ENCODE measurements at regions of chr11 and their contacts with region 1.

Region 1: DNA sequence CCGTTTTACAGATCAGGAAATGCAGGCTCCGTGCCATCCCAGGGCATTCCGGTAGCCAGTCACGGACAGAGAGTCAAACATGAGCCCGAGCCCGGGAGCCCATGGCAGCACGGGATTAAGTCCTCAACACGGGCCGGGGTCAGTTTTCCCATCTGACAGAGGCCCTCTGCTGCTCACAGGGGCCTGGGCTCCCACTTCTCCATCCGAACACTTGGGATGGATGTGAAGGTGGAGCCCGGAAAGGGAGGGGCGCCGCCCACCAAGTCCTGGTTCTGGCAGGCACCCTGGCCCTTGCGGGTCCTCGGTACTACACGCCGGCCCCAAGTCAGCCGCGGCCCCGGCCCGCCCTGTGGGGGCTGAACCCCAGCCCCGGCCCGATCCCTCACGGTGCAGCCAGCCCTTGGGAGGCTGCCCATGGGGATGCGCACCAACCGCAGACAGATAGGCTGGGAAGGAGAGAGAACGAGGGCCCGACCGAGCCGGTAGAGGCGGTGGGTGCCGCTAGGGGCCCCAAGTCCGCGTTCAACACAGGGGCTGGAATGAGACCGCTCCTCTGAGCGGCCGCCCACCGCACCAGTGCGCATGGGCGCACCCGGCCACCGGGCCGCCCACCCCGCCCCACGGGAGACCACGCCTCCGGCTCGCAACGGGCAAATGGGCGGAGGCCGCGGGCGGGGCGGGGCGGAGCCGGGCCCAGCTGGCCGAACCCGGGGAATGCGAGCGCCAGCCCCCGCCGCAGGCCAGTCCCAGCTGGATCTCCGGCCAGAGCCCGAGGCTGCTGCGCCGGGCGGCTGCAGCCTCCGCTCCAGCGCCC is at the start of gene CAPN5:
- DNase-seq: peak; percentile 81
- H3K4me3 Mint-ChIP-seq: peak within 1 kb of the TSS; percentile 76
- H3K27ac Mint-ChIP-seq: peak within 1 kb of the TSS; percentile 54
- H3K4me1 Mint-ChIP-seq: peaks cover 6% of the 10 kb centered on the region
- H3K27me3 Mint-ChIP-seq: peaks cover 18% of the 10 kb centered on the region
- total RNA-seq, gene CAPN5: 0.81 to 0.89 TPM

Region 2: DNA sequence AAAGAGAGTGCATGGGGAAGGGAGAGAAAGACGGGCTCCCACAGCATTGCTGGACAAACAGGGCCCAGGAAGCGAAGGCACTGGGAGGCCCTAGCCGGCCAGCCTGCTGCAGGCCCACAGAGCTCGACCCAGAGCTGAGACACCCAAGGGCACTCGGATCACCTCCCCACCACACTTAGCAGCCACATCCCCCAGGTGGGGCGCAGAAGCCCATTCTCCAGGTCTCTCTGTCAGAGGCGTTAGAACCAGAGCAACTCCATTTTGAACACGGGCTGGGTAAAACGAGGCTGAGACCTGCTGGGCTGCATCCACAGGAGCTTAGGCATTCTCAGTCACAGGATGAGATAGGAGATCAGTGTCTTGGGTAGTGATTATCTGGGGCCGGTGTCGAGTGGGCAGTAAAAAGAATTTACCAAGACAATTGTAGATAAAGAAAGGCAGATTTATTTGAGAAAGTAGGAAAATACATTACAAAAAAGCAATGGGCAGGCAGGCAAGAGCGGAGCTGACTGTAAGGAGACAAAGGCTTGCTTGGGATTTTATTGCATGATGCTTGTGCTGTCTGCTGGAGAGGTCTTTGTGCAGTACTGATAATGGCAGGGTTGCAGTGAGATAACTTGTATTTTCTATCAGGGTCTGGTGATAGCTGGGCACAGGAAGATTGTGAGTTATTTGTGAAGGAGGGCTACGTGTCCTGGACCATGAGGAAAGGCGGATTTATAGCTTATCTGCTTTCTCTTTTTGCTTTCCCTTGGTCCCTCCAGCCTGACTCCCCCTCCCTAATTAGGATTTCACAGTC is 13.0 kb before region 1 on chr11:
- CTCF ChIA-PET with region 1: interaction called, 12 read pairs
- POLR2A ChIA-PET with region 1: no interaction called
- DNase-seq: no peak
- H3K4me3 Mint-ChIP-seq: no peak overlapping the region
- H3K27ac Mint-ChIP-seq: no peak overlapping the region
- H3K4me1 Mint-ChIP-seq: no peaks in the 10 kb centered on the region
- H3K27me3 Mint-ChIP-seq: no peaks in the 10 kb centered on the region

Region 3: DNA sequence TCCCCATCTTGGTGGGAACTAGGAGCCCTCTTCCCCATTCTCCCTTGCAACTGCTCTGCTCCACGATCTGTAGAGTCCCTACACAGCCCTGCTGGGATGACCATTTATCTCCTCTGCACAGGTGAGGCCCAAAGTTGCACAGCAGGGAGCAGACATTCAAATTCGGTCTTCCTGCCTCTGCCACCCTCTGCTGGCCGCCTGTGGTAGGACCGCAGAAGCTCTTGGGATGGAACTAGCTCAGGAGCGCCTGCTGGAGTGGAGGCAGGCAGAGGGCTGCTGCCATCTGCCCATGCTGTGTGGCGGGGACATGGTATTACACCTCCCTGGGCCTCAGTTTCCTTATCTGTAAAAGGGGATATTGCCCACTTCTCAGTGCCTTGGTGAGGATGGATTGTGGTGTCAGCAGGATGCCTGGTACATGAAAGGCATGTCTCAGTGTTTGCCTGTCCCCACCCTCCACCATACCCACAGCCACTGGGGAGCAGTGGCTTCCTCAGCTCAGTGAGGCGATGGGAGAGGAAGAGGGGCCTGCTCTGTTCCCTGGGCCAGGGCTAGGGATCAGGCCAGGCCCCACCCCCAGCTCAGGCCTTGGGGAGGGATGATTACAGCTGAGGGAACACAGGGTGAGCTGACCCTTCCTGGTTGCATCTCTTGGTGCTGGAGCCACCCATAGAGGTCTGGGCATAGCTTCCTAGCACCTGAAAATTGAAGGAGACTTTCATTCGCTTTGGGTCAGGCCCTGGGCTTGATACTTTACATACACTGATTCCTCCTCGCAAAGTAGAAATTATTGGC is 24.9 kb after region 1 on chr11:
- CTCF ChIA-PET with region 1: interaction called, 10 read pairs
- POLR2A ChIA-PET with region 1: no interaction called
- DNase-seq: peak; percentile 85
- H3K4me3 Mint-ChIP-seq: no peak overlapping the region
- H3K27ac Mint-ChIP-seq: no peak overlapping the region
- H3K4me1 Mint-ChIP-seq: peaks cover 8% of the 10 kb centered on the region
- H3K27me3 Mint-ChIP-seq: no peaks in the 10 kb centered on the region

Region 4: DNA sequence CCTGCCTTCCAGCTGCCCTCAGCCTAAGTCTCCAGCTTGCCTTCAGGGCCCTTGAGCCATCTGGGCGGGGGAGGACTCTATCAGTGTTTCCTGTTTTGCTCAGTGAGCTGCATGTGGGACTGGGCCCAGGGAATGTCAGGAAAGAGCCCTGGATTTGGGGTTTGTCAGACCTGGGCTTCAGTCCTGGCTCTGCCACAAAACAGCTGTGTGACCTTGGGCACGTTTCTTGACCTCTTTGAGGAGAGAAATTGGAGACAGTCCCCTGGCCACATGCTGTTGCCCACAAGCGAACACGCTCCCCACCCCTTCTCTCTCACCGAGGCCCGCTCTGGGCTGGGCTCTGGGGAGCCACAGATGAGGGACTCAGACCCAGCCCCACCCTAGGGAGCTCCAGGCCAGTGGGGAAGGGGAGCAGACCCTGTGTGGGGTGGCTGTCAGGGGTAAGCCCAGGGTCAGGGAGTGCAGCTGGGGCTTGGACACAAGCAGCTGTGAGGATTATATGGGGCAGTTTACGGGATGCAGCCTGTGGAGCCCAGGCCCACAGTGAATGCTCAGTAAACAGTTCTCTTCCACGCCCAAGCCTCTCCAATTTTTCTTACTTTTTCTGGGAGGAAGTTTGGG is 73.9 kb after region 1 on chr11:
- CTCF ChIA-PET with region 1: no interaction called
- POLR2A ChIA-PET with region 1: no interaction called
- DNase-seq: no peak
- H3K4me3 Mint-ChIP-seq: no peak overlapping the region
- H3K27ac Mint-ChIP-seq: no peak overlapping the region
- H3K4me1 Mint-ChIP-seq: peaks cover 15% of the 10 kb centered on the region
- H3K27me3 Mint-ChIP-seq: peaks cover 17% of the 10 kb centered on the region

Region 5: DNA sequence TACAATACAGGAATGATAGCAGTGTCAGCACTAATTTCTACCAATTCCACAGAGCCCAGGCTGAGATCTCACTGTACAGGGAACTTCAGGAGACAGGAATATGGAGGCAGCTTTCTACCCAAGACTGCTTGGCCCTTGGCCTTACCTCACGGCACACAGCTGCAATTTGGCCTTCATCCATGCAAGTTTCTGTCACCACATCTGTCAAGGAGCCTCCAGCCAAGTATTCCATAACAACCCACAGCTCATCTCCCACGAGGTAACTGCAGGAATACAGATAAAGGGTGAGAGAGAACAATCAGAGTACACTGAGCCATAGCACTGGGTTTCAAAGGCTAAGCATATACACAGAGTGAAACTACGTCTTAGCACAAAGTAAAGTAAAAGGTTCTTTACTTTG is 274.1 kb after region 1 on chr11:
- CTCF ChIA-PET with region 1: no interaction called
- POLR2A ChIA-PET with region 1: no interaction called
- DNase-seq: no peak
- H3K4me3 Mint-ChIP-seq: no peak overlapping the region
- H3K27ac Mint-ChIP-seq: no peak overlapping the region
- H3K4me1 Mint-ChIP-seq: no peaks in the 10 kb centered on the region
- H3K27me3 Mint-ChIP-seq: no peaks in the 10 kb centered on the region

Measured in activated CD4-positive, alpha-beta T cell treated with anti-CD3 and anti-CD28 coated beads, Interleukin-2, amount 10 ng/mL, durations not matched to agents 7 days and 5 days (primary cell).